ENCODE measurements at regions of chr11 and their contacts with region 1.

Region 1: DNA sequence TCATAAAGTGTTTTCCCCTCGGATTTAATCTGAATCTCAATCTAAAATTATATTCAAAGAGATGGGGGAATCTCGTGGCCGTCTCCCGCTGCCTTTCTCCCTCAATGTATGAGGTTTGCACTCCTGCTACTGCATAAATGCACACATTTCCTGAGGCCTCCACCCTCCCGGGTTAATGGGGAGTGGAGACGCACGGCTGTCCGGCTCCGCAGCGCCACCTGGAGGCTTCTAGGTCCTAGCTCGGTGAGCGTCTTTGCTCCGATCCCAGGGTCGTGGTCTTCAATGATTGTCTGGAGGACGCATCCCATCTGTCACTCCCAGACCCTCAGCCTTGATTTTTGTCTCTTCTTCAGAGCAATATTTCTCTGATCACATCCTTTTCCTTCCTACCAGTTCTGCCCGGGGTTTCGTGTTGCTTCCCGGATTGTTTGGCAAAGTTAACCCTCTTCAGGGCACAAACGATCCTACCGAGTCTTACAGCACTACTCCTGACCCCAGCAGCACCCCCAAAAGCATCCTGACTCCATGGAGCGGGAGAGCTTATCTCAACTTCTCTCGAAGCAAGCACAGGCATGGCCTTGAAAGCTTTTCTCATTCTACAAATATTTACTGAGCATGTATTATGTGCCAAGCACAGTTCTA is at the start of gene LMO1:
- DNase-seq: peak; percentile 54
- ATAC-seq: peak; percentile 83
- H3K4me3 ChIP-seq: peak within 1 kb of the TSS; percentile 28 to 49
- H3K27ac ChIP-seq: no peak within 1 kb of the TSS
- H3K4me1 ChIP-seq: peaks cover 12% of the 10 kb centered on the region
- H3K27me3 ChIP-seq: peaks cover 34% of the 10 kb centered on the region
- CTCF ChIP-seq: peak; percentile 99
- total RNA-seq, gene LMO1: not detected

Region 2: GRCh38 chr11:8006349-8006977 is 257.4 kb before region 1 on chr11:
- CTCF ChIA-PET with region 1: interaction called, 4 read pairs
- POLR2A ChIA-PET with region 1: no interaction called
- in situ Hi-C with region 1: no loop called
- intact Hi-C with region 1: loop called (anchors 10 kb)
- DNase-seq: peak; percentile 77
- ATAC-seq: peak; percentile 95
- H3K4me3 ChIP-seq: no peak overlapping the region
- H3K27ac ChIP-seq: no peak overlapping the region
- H3K4me1 ChIP-seq: no peaks in the 10 kb centered on the region
- H3K27me3 ChIP-seq: peaks cover 2% of the 10 kb centered on the region; the same call in 1 of the 2 replicates
- CTCF ChIP-seq: peak; percentile 98

Region 3: GRCh38 chr11:8192016-8192895 is 71.6 kb before region 1 on chr11:
- CTCF ChIA-PET with region 1: interaction called, 13 read pairs
- POLR2A ChIA-PET with region 1: no interaction called
- in situ Hi-C with region 1: no loop called
- intact Hi-C with region 1: no loop called
- DNase-seq: peak; percentile 74
- ATAC-seq: peak; percentile 93
- H3K4me3 ChIP-seq: no peak overlapping the region
- H3K27ac ChIP-seq: no peak overlapping the region
- H3K4me1 ChIP-seq: no peaks in the 10 kb centered on the region
- H3K27me3 ChIP-seq: peaks cover 15% of the 10 kb centered on the region
- CTCF ChIP-seq: peak; percentile 98

Region 4: GRCh38 chr11:8225589-8226036 is 38.3 kb before region 1 on chr11:
- CTCF ChIA-PET with region 1: interaction called, 10 read pairs
- POLR2A ChIA-PET with region 1: no interaction called
- in situ Hi-C with region 1: no loop called
- intact Hi-C with region 1: loop called (anchors 1 kb)
- DNase-seq: peak; percentile 55
- ATAC-seq: peak; percentile 81
- H3K4me3 ChIP-seq: no peak overlapping the region
- H3K27ac ChIP-seq: no peak overlapping the region
- H3K4me1 ChIP-seq: no peaks in the 10 kb centered on the region
- H3K27me3 ChIP-seq: no peaks in the 10 kb centered on the region
- CTCF ChIP-seq: peak; percentile 99

Region 5: DNA sequence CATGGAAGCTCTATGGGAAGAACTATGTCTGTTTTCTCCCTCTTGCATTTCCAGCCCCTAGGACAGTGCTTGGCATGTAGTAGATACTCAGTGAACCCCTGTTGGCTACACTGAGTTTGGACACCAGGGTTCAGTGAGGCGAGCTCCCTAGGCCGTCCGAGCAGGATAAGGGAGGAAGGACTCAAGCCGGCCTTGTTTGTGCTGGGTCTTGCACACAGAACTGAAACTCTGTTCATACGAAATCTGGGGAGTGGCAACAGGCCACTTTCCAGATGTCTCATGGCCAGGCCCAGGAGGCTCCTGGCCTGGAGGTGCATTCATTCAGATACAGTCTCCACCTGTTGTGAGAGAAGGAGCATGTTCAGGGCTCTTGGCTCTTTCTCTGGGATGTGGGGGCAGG is 23.4 kb after region 1 on chr11:
- CTCF ChIA-PET with region 1: interaction called, 14 read pairs
- POLR2A ChIA-PET with region 1: no interaction called
- in situ Hi-C with region 1: no loop called
- intact Hi-C with region 1: no loop called
- DNase-seq: no peak
- ATAC-seq: no peak
- H3K4me3 ChIP-seq: no peak overlapping the region
- H3K27ac ChIP-seq: no peak overlapping the region
- H3K4me1 ChIP-seq: no peaks in the 10 kb centered on the region
- H3K27me3 ChIP-seq: no peaks in the 10 kb centered on the region
- CTCF ChIP-seq: no peak

Region 6: DNA sequence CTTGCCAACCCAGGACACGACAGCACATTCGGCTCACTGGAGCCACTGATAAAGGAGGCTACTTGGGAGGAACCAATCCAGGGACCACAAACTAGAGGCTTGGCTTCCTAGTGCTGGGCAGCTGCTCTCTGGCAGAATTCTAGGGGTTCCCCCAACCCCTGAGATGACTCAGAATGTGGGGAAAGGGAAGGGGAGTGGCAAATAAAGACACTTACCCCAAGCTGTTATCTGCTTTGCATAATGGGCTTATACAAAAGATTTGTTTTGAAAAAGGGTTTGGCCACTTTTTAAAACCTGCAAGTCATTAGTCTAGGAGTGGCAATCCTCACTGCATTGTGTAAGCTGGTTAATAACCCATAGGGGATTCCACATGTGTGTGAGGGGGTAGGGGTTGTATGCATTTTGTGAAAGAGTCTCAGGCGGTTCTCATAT is 63.9 kb after region 1 on chr11:
- CTCF ChIA-PET with region 1: no interaction called
- POLR2A ChIA-PET with region 1: no interaction called
- in situ Hi-C with region 1: no loop called
- intact Hi-C with region 1: no loop called
- DNase-seq: no peak
- ATAC-seq: no peak
- H3K4me3 ChIP-seq: no peak overlapping the region
- H3K27ac ChIP-seq: no peak overlapping the region
- H3K4me1 ChIP-seq: peaks cover 14% of the 10 kb centered on the region
- H3K27me3 ChIP-seq: peaks cover 5% of the 10 kb centered on the region
- CTCF ChIP-seq: no peak

Region 7: DNA sequence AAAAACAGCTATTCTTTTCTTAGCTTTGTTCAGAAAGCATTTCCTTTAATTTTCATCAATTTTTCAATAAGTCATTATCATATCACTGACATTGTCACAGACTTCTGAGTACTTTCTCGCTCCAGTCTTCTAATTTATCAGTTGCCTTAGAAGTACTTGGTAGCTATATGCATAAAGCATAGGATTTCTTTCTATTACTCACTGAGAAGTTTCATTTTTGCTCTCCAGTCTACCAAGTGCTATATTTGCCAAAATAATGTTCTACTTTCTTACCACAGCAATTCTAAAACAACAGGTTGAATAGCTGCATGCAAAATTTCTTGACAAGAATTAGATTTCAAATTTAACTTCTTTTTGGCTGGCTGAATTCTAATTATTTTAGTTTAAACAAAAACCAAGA is 213.8 kb after region 1 on chr11:
- CTCF ChIA-PET with region 1: no interaction called
- POLR2A ChIA-PET with region 1: no interaction called
- in situ Hi-C with region 1: no loop called
- intact Hi-C with region 1: no loop called
- DNase-seq: no peak
- ATAC-seq: no peak
- H3K4me3 ChIP-seq: no peak overlapping the region
- H3K27ac ChIP-seq: no peak overlapping the region
- H3K4me1 ChIP-seq: no peaks in the 10 kb centered on the region
- H3K27me3 ChIP-seq: peaks cover 13% of the 10 kb centered on the region
- CTCF ChIP-seq: no peak